Activated CD4-positive, alpha-beta memory T cell treated with anti-CD3 and anti-CD28 coated beads for 36 hours (primary cell): ENCODE measurements at regions of chr20 and their contacts with region 1.

Region 1: GRCh38 chr20:31859998-31860709 is 10.2 kb downstream of the DUSP15 start:
- DNase-seq: no peak
- H3K4me3 Mint-ChIP-seq: no peak overlapping the region
- H3K27ac Mint-ChIP-seq: no peak overlapping the region
- H3K4me1 Mint-ChIP-seq: peaks cover 4% of the 10 kb centered on the region
- H3K27me3 Mint-ChIP-seq: peaks cover 14% of the 10 kb centered on the region

Region 2: GRCh38 chr20:31845300-31845863 is 14.8 kb before region 1 on chr20 and contains the start of gene FOXS1:
- CTCF ChIA-PET with region 1: interaction called, 17 read pairs
- POLR2A ChIA-PET with region 1: no interaction called
- intact Hi-C with region 1: no loop called
- DNase-seq: no peak
- H3K4me3 Mint-ChIP-seq: no peak within 1 kb of the TSS
- H3K27ac Mint-ChIP-seq: no peak within 1 kb of the TSS
- H3K4me1 Mint-ChIP-seq: no peaks in the 10 kb centered on the region
- H3K27me3 Mint-ChIP-seq: peaks cover 3% of the 10 kb centered on the region
- total RNA-seq, gene FOXS1: not detected